ENCODE measurements at regions of chr12 and their contacts with region 1.

Region 1: DNA sequence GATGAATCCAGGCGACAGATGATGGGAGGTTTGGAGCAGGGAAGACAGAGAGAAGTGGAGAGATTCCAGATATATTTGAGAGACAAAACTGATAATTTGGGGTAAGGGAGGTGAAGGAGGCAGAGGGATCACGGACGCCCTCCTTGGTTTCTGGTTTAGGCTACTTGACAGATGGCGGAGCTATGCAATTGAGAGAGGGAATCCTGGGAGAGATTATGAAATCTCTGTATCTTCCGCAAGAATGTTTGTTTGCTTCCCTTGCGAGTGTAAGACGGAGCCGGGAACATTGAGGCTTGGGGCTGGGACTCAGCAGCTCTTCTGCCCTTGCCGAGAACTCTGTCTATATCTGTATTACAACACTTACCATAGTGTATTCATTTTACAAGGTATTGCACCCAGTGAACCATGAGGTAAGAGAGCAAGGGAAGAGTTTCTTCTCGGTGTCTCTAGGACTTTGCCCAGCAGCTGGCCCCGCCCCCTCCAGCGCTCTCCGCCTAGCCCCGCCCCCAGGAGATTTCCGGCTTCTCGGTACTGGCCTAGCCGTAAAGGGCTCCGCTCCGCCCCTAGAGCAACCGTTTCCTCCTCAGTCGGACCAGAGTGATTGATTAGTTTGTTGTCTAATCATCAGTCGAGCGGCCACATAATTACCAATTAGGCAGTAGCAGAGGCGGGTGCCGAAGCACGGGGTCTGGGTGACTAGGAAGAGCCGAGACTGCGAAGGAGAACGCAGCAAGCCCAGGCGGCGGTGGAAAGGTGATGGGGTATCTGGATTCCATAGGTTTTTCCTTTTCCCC is at the start of gene PRR13:
- DNase-seq: peak; percentile 99 to 100
- ATAC-seq: peak; percentile 96
- H3K4me3 ChIP-seq: peak within 1 kb of the TSS; percentile 71
- H3K27ac ChIP-seq: peak within 1 kb of the TSS; percentile 91 to 93
- H3K4me1 ChIP-seq: peaks cover 26% of the 10 kb centered on the region
- CTCF ChIP-seq: 0 out of 3 replicates have a peak, but pooled peaks have one; percentile 8
- EP300 ChIP-seq: no peak
- POLR2A ChIP-seq: peak; percentile 95
- RAD21 ChIP-seq: no peak
- polyA plus RNA-seq, gene PRR13: 203 and 257 TPM in 2 replicates

Region 2: GRCh38 chr12:53427905-53428594 is 13.2 kb before region 1 on chr12:
- CTCF ChIA-PET with region 1: interaction called, 12 read pairs
- POLR2A ChIA-PET with region 1: interaction called, 29 read pairs
- DNase-seq: peak; percentile 89 to 91
- ATAC-seq: peak; percentile 94 to 96
- H3K4me3 ChIP-seq: no peak overlapping the region
- H3K27ac ChIP-seq: peak overlapping the region; percentile 71 to 85
- H3K4me1 ChIP-seq: peaks cover 45% of the 10 kb centered on the region
- CTCF ChIP-seq: no peak
- EP300 ChIP-seq: no peak
- POLR2A ChIP-seq: no peak
- RAD21 ChIP-seq: 0 out of 5 replicates have a peak, but pooled peaks of 1 of the 2 experiments have one; percentile 12

Region 3: DNA sequence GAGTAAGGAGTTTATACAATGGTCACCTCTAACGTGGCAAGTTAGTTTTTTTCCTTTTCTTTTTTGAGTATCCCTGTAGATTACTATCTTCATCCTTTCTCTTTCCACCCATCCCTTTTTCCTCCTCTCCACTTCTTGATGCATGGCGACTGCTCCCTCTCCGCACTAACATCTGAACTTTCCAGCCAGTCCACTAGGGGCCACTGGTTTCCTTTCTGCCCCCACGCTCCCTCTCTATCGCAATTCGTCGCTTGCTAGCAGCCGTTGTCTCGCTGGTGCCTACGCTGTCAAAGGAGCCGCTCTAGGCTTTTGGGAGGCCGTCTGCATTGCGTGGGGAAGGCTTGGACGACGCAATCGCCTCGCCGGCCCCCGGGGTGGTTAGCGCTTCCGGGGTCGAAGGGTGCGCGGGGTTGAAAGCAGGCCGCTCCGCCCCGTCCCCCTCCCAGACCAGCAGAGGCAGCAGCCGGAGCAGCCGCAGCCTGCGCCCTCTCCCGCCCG is 10.5 kb after region 1 on chr12 and contains the start of gene PCBP2:
- CTCF ChIA-PET with region 1: interaction called, 13 read pairs
- POLR2A ChIA-PET with region 1: interaction called, 10 read pairs
- DNase-seq: peak; percentile 99 to 100
- ATAC-seq: peak; percentile 94 to 96
- H3K4me3 ChIP-seq: peak within 1 kb of the TSS; percentile 88
- H3K27ac ChIP-seq: peak within 1 kb of the TSS; percentile 98 to 99
- H3K4me1 ChIP-seq: peaks cover 23% of the 10 kb centered on the region
- CTCF ChIP-seq: peak; percentile 66
- EP300 ChIP-seq: no peak
- POLR2A ChIP-seq: peak; percentile 72
- RAD21 ChIP-seq: peak; percentile 29 to 46; a peak in 3 of 5 replicates
- polyA plus RNA-seq, gene PCBP2: 367 and 604 TPM in 2 replicates

Region 4: DNA sequence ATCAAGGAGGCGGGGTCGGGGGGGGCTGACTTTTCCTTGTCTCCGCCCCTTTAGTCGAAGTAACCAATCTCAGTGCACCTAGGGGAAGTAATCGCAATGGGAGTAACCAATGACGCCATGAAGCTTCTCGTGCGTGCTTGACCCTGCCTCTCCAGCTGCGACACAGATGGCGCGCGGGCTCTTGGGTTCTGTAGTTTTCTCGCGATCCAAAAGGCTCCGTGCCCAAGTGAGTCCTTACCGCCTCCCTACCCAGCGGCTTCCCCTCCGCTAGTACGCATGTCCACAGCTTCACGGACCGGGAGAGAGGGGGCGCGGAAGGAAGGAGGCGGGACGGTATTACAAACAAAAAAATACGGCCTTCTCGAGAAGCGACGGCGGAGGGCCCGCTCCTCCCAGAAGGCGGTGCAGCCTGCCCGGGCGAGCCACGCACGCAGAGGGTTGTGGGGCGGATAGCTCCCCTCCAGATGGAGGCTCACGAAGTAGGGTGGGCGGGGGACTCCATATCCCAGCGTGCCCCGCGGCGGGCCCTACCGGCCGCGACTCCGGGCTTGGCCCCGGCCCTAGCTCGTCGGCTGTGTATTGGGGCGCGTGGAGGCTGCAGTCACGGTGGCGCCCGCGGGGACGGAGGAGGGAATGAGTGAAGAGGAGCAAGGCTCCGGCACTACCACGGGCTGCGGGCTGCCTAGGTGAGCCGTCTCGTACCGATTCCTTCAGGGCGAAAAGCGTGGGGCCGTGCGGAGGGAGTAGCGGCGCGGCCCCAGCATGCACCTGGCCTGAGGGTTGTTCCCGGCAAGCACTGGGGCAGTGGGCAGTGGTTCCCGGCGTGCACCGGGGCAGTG is 59.8 kb after region 1 on chr12 and contains the start of gene TARBP2:
- CTCF ChIA-PET with region 1: interaction called, 3 read pairs
- POLR2A ChIA-PET with region 1: interaction called, 12 read pairs
- DNase-seq: peak; percentile 96 to 100
- ATAC-seq: peak; percentile 73 to 82
- H3K4me3 ChIP-seq: peak within 1 kb of the TSS; percentile 64
- H3K27ac ChIP-seq: peak within 1 kb of the TSS; percentile 94 to 96
- H3K4me1 ChIP-seq: peaks cover 45% of the 10 kb centered on the region
- CTCF ChIP-seq: no peak
- EP300 ChIP-seq: no peak
- POLR2A ChIP-seq: peak; percentile 72
- RAD21 ChIP-seq: no peak
- polyA plus RNA-seq, gene TARBP2: 41.5 and 51.2 TPM in 2 replicates